Tibial artery (tissue), 4 donors: ENCODE measurements at regions of chr16 and their contacts with region 1.

Region 1: DNA sequence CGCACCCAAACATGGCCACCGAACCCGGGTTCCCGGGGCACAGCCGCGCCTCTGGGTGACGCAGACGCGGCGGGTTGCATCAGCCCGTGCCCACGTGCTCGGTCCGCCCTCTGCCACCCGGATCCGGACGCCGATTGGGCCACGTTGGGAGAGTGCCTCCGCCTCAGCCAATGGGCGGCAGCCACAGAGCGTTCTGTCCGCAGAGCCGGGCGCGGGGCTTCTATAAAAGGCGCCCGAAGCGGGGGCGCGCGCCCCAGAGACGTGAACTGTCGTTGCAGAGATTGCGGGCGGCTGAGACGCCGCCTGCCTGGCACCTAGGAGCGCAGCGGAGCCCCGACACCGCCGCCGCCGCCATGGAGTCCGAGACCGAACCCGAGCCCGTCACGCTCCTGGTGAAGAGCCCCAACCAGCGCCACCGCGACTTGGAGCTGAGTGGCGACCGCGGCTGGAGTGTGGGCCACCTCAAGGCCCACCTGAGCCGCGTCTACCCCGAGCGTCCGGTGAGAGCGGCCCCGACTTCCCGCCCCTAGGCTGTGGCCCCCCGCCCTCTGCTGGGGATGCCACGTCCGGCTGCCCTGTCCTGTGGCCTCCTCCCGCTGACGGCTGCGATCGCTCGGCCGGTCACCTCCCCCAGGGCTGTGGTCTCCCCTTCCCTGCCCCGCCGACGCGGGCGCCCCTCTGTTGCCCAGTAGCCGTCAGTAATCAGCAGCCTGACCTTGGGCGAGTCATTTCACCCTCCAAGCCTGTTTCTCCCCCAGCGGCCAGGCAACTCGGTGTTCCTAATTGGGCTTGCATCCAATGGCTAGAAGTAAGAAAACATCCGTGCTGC is at the start of gene HERPUD1:
- DNase-seq: peak; percentile 98 to 99
- H3K4me3 ChIP-seq: peak within 1 kb of the TSS; percentile 64 to 97
- H3K27ac ChIP-seq: peak within 1 kb of the TSS; percentile 94 to 99
- H3K4me1 ChIP-seq: peaks cover 0 to 50% (median 23%) of the 10 kb centered on the region in 4 donors
- H3K27me3 ChIP-seq: no peaks in the 10 kb centered on the region
- CTCF ChIP-seq: peak; percentile 23 to 30

Region 2: DNA sequence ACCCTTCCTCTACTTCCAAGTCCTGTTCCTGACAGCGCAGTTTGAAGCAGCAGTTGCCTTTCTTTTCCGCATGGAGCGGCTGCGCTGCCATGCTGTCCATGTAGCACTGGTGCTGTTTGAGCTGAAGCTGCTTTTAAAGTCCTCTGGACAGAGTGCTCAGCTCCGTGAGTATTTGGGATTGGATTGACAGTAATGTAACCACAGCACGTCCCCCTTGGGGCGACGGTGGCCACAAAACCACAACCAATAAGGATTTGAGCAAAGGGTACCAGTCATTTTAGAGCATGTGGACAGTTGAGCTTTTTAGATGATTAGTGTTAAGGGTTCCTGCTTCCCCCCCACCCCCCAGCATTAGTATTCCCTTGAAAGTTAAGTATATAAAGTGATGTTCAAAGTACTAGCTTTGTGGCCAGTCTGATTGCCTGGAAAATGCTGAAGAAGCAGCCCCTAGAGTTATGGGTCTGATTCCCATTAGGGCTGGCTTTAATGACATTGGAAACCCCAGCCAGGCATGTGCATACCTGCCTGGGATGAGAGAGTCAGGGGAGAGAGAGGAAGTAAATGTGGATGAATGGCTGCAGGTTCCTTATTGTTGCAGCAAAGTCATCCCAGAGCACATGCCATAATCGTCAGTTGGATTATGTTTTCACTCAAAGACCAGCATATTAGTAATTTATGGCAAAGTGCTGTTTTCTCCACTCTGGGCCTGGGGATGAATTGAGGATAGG is 98.7 kb before region 1 on chr16:
- intact Hi-C with region 1: no loop called
- DNase-seq: no peak
- H3K4me3 ChIP-seq: no peak overlapping the region
- H3K27ac ChIP-seq: no peak overlapping the region
- H3K4me1 ChIP-seq: no peaks in the 10 kb centered on the region
- H3K27me3 ChIP-seq: no peaks in the 10 kb centered on the region
- CTCF ChIP-seq: no peak

Region 3: GRCh38 chr16:56974549-56975300 is 42.6 kb after region 1 on chr16:
- intact Hi-C with region 1: no loop called
- DNase-seq: no peak
- H3K4me3 ChIP-seq: no peak overlapping the region
- H3K27ac ChIP-seq: no peak overlapping the region
- H3K4me1 ChIP-seq: no peaks in the 10 kb centered on the region
- H3K27me3 ChIP-seq: no peaks in the 10 kb centered on the region
- CTCF ChIP-seq: no peak

Region 4: GRCh38 chr16:56988948-56989945 is 57.1 kb after region 1 on chr16 and contains the start of gene NLRC5:
- intact Hi-C with region 1: loop called (anchors 5 kb)
- DNase-seq: peak; percentile 89 to 93
- H3K4me3 ChIP-seq: peak within 1 kb of the TSS; percentile 70 to 80
- H3K27ac ChIP-seq: peak within 1 kb of the TSS; percentile 90 to 91
- H3K4me1 ChIP-seq: peaks cover 0 to 64% (median 36%) of the 10 kb centered on the region in 4 donors
- H3K27me3 ChIP-seq: no peaks in the 10 kb centered on the region
- CTCF ChIP-seq: no peak

Region 5: DNA sequence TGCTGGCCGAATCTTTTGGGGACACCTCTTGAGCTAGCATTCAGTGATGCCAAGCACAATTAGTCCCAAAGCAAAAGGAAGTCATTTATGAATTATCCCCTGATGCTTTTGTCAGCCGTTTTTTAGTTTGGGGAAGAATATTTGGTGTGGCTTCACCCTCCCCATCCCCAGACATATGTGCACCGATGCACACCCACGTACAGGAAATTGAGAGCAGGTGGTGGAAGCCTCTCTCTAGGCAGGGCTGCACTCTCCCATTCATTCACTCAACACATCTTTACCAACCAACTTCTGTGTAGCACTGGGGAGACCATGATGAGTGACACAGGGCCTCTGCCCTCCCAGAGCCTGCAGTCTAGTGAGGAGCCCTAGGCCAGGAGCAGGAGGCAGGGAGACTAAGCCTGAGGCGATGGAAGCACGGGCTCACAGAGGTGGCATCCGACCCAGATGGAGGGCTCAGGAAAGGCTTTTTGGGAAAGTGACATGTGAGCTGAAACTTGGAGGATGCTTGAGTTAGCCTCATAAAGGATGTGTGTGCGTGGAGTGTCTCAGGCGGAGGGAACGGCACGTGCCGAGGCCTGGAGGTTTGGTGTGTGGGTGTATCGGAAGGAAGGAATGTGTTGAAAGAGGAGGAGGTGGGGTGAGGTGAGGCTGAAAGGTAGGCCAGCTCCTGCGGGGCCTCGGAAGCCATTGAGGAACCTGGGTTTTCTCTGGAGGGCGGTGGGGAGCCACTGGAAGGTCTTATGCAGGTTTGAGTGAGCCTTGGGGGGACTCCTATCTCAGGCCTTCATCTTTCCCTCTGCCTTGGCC is 209.9 kb after region 1 on chr16:
- intact Hi-C with region 1: no loop called
- DNase-seq: peak in 1 of 2 donors; percentile 62
- H3K4me3 ChIP-seq: no peak overlapping the region
- H3K27ac ChIP-seq: no peak overlapping the region
- H3K4me1 ChIP-seq: peaks cover 0 to 17% (median 5%) of the 10 kb centered on the region in 4 donors
- H3K27me3 ChIP-seq: no peaks in the 10 kb centered on the region
- CTCF ChIP-seq: no peak